Common myeloid progenitor, CD34-positive (primary cell): ENCODE measurements at regions of chr12 and their contacts with region 1.

Region 1: GRCh38 chr12:57726151-57726883 is 12.2 kb downstream of the AGAP2 start:
- DNase-seq: peak; percentile 22 to 65 (median 62)
- H3K4me3 ChIP-seq: peak overlapping the region in 1 of 7 experiments; percentile 43
- H3K27ac ChIP-seq: no peak overlapping the region
- H3K4me1 ChIP-seq: peaks cover 0 to 2% (median 0%) of the 10 kb centered on the region in 4 experiments
- H3K27me3 ChIP-seq: no peaks in the 10 kb centered on the region

Region 2: GRCh38 chr12:57342207-57342691 is 384.1 kb before region 1 on chr12:
- CTCF ChIA-PET with region 1: no interaction called
- POLR2A ChIA-PET with region 1: no interaction called
- DNase-seq: peak; percentile 64 to 93 (median 84)
- H3K4me3 ChIP-seq: no peak overlapping the region
- H3K27ac ChIP-seq: no peak overlapping the region
- H3K4me1 ChIP-seq: peaks cover 0 to 22% (median 9%) of the 10 kb centered on the region in 4 experiments
- H3K27me3 ChIP-seq: no peaks in the 10 kb centered on the region

Region 3: DNA sequence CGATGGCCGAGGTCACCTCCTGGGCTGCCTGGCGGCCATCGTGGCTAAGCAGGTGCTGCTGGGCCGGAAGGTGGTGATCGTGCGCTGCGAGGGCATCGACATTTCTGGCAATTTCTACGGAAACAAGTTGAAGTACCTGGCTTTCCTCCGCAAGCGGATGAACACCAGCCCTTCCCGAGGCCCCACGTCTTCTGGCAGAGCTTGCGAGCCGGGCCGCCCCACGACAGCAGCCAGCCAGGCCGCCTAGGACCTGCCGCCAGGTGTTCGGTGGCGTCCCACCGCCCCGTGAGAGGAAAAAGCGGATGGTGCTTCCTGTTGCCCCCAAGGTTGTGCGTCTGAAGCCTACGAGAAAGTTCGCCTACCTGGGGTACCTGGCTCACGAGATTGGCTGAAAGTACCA is 51.6 kb before region 1 on chr12:
- CTCF ChIA-PET with region 1: no interaction called
- POLR2A ChIA-PET with region 1: no interaction called
- DNase-seq: no peak
- H3K4me3 ChIP-seq: no peak overlapping the region
- H3K27ac ChIP-seq: no peak overlapping the region
- H3K4me1 ChIP-seq: no peaks in the 10 kb centered on the region
- H3K27me3 ChIP-seq: no peaks in the 10 kb centered on the region

Region 4: DNA sequence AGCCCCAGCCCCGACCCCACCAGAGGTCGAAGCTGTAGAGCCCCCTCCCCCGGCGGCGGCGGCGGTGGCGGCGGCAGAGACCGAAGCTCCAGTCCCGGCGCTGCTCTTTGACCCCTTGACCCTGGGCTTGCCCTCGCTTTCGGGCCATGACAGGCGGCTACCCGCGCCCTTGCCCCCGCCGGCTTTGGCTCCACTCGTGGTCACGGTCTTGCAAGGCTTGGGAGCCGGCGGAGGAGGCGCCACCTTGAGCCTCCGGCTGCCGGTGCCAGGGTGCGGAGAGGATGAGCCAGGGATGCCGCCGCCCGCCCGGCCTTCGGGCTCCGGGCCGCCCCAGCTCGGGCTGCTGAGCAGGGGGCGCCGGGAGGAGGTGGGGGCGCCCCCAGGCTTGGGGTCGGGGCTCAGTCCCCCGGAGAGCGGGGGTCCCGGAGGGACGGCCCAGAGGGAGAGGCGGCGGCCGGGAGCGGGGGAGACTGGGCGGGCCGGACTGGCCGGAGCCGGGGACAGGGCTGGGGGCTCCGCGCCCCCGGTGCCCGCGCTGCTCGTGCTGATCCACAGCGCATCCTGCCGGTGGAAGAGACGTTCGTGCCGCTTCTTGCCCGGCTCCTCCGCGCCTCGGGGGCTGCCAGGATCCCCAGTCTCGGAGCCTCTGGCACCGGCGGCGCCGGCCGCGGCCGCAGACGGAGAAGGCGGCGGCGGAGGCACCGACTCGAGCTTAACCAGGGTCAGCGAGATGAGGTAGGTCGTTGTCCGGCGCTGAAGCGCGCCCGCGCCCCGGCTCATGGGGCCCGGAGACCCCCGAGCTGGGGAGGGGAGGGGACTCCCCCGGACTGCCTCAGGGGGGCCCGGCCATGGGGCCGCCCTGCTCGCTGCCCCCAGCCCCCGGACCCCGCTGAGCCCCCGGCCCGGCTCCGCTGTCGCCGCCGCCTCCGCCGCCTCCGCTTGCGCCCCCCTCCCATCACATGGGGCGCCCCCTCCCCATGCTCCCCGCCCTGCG is 11.4 kb after region 1 on chr12:
- CTCF ChIA-PET with region 1: interaction called, 11 read pairs
- POLR2A ChIA-PET with region 1: interaction called, 7 read pairs
- DNase-seq: no peak
- H3K4me3 ChIP-seq: no peak overlapping the region
- H3K27ac ChIP-seq: no peak overlapping the region
- H3K4me1 ChIP-seq: peaks cover 18 to 39% (median 37%) of the 10 kb centered on the region in 4 experiments
- H3K27me3 ChIP-seq: no peaks in the 10 kb centered on the region

Region 5: DNA sequence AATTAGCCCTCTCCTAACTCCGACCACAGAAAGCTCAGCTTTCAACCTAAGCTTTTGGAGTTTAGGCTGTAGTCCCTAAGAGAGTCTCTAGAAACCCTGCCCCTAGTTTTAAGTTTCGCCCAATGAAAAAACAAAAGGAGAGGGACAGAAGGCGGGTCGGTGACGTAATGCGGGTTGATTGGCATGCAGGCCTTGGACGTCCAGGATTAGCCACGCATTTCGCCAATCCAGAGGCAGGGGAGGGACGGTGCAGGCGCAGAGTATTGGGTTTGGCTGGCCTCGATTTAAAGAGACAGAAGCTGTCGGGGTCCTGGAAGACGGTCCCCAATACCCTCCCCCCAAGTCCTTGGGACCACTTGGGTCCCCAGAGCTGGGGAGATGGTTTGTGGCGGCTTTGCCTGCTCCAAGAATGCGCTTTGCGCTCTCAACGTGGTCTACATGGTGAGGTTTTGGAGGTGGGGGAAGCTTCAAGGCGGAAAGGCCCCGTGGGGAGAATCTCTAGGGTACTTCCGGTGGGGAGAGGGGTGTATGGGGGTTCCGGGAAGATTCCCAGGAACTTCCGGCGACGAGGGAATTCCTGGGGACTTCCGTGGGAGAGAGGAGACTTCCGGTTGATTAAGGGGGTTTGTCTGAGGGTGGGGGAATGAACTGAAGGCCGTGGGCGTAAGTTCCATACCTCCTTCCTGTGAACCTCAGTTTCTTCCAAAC is 18.6 kb after region 1 on chr12 and contains the start of gene TSPAN31:
- CTCF ChIA-PET with region 1: interaction called, 11 read pairs
- POLR2A ChIA-PET with region 1: interaction called, 7 read pairs
- DNase-seq: peak; percentile 99
- H3K4me3 ChIP-seq: peak within 1 kb of the TSS; percentile 79 to 99 (median 86)
- H3K27ac ChIP-seq: peak within 1 kb of the TSS; percentile 95 to 98
- H3K4me1 ChIP-seq: peaks cover 18 to 48% (median 42%) of the 10 kb centered on the region in 4 experiments
- H3K27me3 ChIP-seq: no peaks in the 10 kb centered on the region

Region 6: DNA sequence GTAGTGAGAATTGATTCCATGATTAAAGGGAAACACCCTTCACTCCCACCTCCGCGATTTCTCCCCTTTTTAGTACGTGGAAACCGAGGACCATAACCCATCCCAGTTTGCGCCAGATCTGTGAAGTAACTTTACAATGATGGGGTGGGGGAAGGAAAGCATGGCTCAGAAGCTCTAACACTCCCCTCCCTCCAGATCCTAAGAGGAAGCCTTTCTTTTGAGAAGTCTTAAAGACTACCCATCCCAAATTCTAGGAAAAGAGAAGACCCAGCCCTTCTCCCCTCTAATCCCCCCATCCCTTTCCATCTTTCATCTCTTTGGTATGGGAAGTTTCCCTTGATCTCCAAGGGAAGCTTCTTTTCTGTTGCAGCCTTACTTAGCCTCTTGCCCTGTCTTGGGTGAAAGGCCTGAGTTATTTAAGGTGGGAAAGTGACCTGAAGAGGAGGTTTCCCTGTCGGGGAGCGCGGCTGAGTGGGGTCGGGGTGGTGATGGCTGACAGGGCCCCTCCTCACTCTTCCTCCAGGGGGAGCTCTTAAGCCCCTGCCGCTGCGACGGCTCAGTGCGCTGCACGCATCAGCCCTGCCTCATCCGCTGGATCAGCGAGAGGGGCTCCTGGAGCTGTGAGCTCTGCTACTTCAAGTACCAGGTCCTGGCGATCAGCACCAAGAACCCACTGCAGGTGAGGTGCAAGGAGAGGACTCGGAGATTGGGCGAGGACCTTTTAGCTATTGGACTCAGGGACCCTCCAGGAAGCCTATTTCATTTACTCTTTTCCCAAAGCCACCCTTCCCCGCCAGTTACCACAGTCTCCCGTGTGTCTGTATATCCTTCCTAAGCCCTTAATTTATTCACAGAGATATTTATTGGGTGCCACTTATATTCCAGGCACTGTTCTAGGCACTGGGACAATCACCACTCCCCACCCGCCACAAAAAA is 30.4 kb after region 1 on chr12:
- CTCF ChIA-PET with region 1: no interaction called
- POLR2A ChIA-PET with region 1: no interaction called
- DNase-seq: peak; percentile 69 to 81 (median 77)
- H3K4me3 ChIP-seq: peak overlapping the region in 6 of 7 experiments; percentile 59 to 83 (median 71)
- H3K27ac ChIP-seq: no peak overlapping the region
- H3K4me1 ChIP-seq: peaks cover 13 to 39% (median 36%) of the 10 kb centered on the region in 4 experiments
- H3K27me3 ChIP-seq: peaks cover 0 to 5% (median 0%) of the 10 kb centered on the region in 5 experiments

Region 7: GRCh38 chr12:57771708-57772428 is 45.6 kb after region 1 on chr12 and contains the start of gene METTL1:
- CTCF ChIA-PET with region 1: no interaction called
- POLR2A ChIA-PET with region 1: no interaction called
- DNase-seq: peak; percentile 97 to 99 (median 98)
- H3K4me3 ChIP-seq: peak within 1 kb of the TSS; percentile 86 to 96 (median 93)
- H3K27ac ChIP-seq: peak within 1 kb of the TSS; percentile 64 to 88
- H3K4me1 ChIP-seq: peaks cover 2 to 24% (median 19%) of the 10 kb centered on the region in 4 experiments
- H3K27me3 ChIP-seq: peaks cover 0 to 10% (median 3%) of the 10 kb centered on the region in 5 experiments